HepG2 (cell line): ENCODE measurements at regions of chr18 and their contacts with region 1.

Region 1: GRCh38 chr18:69400253-69400975 is at the start of gene DOK6:
- DNase-seq: peak; percentile 84
- ATAC-seq: peak; percentile 86
- H3K4me3 ChIP-seq: peak within 1 kb of the TSS; percentile 71 to 83 (median 82)
- H3K27ac ChIP-seq: peak within 1 kb of the TSS; percentile 77
- H3K4me1 ChIP-seq: peaks cover 45% of the 10 kb centered on the region
- H3K27me3 ChIP-seq: peaks cover 0 to 4% of the 10 kb centered on the region in 2 experiments; a peak in 3 of 5 replicates
- CTCF ChIP-seq: no peak
- EP300 ChIP-seq: no peak
- POLR2A ChIP-seq: peak; percentile 57 to 72
- RAD21 ChIP-seq: no peak
- total RNA-seq, gene DOK6: 14.7 and 17.2 TPM in 2 replicates

Region 2: DNA sequence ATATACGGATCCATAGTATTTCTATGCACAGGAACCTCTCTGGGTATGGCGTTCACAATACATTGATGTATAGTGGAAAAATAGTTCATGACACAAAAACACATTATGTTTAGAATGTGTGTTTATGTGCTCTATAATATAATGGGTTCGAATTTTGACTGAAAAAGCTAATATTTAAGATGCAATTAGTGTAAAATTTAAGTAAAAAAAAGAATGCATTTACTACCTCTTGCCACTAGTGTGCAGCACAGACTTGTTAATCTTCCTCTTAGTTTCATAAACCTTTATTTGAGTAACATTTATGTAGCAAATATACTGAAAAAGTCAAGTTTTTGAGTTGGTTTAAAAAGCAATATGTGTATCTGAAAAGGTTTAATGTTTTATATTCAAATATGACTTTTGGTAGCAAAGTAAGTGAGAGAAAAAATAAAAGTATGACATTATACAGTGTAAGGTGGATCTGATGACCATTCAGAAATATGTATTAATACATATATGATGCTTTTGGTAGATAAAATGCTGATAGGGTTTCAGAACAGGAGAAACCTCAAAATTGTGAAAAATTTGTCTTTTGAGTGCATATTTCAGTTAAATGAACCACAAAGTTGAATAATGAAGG is 553.1 kb before region 1 on chr18:
- CTCF ChIA-PET with region 1: no interaction called
- POLR2A ChIA-PET with region 1: no interaction called
- in situ Hi-C with region 1: no loop called
- intact Hi-C with region 1: loop called (anchors 10 kb)
- DNase-seq: peak; percentile 4
- ATAC-seq: no peak
- H3K4me3 ChIP-seq: no peak overlapping the region
- H3K27ac ChIP-seq: no peak overlapping the region
- H3K4me1 ChIP-seq: no peaks in the 10 kb centered on the region
- H3K27me3 ChIP-seq: no peaks in the 10 kb centered on the region
- CTCF ChIP-seq: peak; percentile 63
- EP300 ChIP-seq: no peak
- POLR2A ChIP-seq: no peak
- RAD21 ChIP-seq: peak; percentile 38; the same call in 1 of the 2 replicates

Region 3: DNA sequence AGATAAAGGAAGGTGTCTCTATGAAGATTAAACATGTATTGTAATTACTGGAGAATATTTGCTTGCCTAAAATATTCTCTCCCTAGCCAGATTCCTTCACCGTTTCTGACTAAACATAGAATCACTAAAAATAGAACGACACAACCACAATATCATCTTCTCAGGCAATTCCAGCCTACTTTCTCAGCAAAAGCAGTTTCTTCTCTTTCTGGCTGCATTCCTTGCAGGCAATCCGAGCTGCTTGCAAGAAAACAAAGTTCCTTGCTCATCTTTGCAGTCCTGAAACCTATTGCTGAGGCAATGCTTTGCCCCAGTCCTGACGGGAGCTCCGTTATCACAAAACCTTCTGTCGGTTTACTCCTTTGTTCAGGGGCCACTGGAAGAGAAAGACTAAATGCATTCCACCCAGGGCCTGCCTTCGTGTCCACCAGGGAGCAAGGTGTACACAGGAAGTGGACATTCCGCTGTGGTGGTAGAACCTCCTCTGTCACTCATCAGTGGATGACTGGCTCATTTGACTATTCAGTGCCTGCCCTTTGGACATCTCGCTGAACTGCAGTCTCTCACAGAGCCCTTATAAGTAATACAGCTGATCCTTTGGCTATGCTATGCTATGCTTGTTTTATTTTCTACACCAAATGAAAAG is 238.9 kb before region 1 on chr18:
- CTCF ChIA-PET with region 1: no interaction called
- POLR2A ChIA-PET with region 1: no interaction called
- in situ Hi-C with region 1: no loop called
- intact Hi-C with region 1: loop called (anchors 10 kb)
- DNase-seq: peak; percentile 60
- ATAC-seq: peak; percentile 100
- H3K4me3 ChIP-seq: peak overlapping the region in 2 of 3 experiments; percentile 1 to 45; a peak in 2 of 6 replicates
- H3K27ac ChIP-seq: no peak overlapping the region
- H3K4me1 ChIP-seq: peaks cover 19% of the 10 kb centered on the region
- H3K27me3 ChIP-seq: no peaks in the 10 kb centered on the region
- CTCF ChIP-seq: peak; percentile 21; the same call in 1 of the 2 replicates
- EP300 ChIP-seq: no peak
- POLR2A ChIP-seq: no peak
- RAD21 ChIP-seq: no peak

Region 4: DNA sequence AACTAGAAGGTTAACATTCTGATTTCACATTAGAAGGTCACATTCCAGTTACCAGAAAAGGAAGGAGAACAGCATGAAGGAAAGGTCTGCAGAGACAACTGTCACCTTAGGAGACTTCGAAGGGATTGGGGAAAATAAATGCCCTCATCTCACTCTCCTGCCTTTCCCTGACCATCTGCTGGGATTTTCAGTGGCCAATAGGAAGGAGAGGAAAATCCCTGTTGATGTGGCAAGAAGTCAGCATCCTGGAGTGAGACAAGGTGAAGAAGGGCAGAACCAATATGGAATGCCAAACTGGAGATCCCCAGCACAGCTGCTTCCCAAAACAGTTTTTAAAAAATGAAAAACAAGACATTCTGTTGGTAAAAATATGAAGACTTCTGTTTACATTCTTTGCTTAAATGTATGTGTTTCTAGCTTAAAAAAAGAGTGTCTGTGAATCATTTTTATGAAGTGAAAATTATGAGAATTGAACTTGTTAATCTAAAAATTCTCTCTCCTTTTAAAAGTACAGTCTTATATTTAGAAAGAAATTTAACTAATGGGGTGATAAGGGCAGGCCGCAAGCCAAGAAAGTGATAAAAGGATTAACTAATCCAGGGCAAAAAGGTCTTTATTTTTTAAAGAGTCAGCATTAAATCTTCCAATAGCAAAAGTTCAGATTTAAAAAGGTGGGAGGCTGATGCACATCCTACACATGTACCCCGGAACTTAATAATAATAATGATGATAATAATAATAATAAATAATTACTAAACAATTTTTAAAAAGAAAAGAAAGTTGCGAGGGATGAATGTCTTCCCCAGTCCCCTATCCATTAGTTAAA is 160.4 kb before region 1 on chr18:
- CTCF ChIA-PET with region 1: no interaction called
- POLR2A ChIA-PET with region 1: no interaction called
- in situ Hi-C with region 1: no loop called
- intact Hi-C with region 1: loop called (anchors 10 kb)
- DNase-seq: no peak
- ATAC-seq: no peak
- H3K4me3 ChIP-seq: no peak overlapping the region
- H3K27ac ChIP-seq: no peak overlapping the region
- H3K4me1 ChIP-seq: no peaks in the 10 kb centered on the region
- H3K27me3 ChIP-seq: no peaks in the 10 kb centered on the region
- CTCF ChIP-seq: no peak
- EP300 ChIP-seq: no peak
- POLR2A ChIP-seq: no peak
- RAD21 ChIP-seq: no peak

Region 5: DNA sequence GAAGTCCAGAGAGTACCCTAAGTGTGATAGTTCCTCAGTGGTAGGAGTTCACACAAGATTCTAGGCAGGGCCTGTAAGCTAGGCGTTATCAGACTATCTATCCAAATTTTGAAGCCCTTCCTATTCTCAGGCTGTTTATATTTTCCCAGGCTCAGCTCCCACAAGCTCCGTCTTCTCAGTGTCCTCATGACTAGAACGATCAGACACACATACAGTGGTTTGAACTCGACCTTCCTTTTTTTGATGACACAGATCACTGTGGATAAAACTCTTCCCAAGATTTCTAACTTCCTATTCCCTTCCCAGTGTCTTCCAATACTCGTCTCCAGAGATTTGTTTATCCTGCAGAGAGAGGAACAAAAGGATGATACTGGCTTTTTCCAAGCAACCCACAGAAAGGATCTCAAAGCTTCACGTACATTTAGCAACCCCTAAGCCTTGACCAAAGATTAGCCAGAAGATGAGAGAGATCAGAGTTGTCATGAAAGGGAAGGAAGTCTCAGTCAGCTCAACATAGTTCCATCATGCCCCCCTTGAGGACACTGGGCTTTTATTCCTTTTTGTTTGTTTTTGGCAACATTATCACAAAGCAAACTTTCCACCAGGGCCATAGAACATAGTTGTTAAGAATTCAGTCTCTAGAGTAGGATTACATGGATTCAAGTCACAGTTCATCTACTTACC is 42.1 kb before region 1 on chr18:
- CTCF ChIA-PET with region 1: no interaction called
- POLR2A ChIA-PET with region 1: interaction called, 6 read pairs
- in situ Hi-C with region 1: no loop called
- intact Hi-C with region 1: loop called (anchors 2 kb)
- DNase-seq: peak; percentile 99
- ATAC-seq: peak; percentile 97
- H3K4me3 ChIP-seq: peak overlapping the region in 2 of 3 experiments; percentile 17; a peak in 2 of 6 replicates
- H3K27ac ChIP-seq: peak overlapping the region; percentile 96
- H3K4me1 ChIP-seq: peaks cover 77% of the 10 kb centered on the region
- H3K27me3 ChIP-seq: no peaks in the 10 kb centered on the region
- CTCF ChIP-seq: no peak
- EP300 ChIP-seq: peak; percentile 85 to 99; a peak in 3 of 4 replicates
- POLR2A ChIP-seq: peak in 1 of 2 experiments; percentile 60; a peak in 2 of 4 replicates
- RAD21 ChIP-seq: no peak

Region 6: DNA sequence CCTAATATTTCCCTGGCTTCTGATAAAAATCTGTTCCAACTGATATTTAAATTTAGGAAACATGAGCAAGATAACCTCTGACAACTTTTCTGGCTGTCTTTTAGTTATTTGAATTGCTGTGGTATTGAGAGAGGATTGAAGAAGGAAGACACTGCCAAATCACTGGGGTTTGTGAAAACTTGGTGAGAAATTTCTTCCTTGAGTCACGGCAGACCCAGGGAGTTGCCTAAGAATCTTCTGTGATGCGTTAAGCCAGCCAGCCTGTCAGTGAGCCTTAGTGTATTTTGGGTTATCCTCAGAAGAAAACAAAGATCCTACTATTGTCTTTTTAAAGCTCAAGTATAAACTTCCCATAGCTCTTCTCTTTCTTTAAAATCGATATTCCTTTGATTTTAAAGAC is 17.2 kb before region 1 on chr18:
- CTCF ChIA-PET with region 1: no interaction called
- POLR2A ChIA-PET with region 1: no interaction called
- in situ Hi-C with region 1: no loop called
- intact Hi-C with region 1: no loop called
- DNase-seq: no peak
- ATAC-seq: no peak
- H3K4me3 ChIP-seq: no peak overlapping the region
- H3K27ac ChIP-seq: no peak overlapping the region
- H3K4me1 ChIP-seq: peaks cover 13% of the 10 kb centered on the region
- H3K27me3 ChIP-seq: no peaks in the 10 kb centered on the region
- CTCF ChIP-seq: no peak
- EP300 ChIP-seq: no peak
- POLR2A ChIP-seq: no peak
- RAD21 ChIP-seq: no peak

Region 7: DNA sequence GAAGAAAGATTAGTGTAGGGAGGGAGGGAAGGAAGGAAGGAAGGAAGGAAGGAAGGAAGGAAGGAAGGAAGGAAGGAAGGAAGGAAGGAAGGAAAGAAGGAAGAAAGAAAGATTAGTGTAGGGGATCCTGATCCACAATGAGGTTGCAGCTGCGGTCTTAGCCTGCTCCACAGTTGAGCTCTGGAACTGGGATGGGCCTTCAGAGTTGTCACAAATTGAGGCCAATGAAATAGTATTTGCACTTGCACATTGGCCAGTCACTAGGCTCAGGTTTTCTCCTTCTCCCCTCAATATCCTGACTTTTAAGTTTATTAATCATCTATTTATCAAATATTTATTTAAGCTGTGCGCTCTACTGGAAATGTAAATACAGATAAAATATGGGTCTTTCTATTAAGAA is 34.6 kb after region 1 on chr18:
- CTCF ChIA-PET with region 1: no interaction called
- POLR2A ChIA-PET with region 1: no interaction called
- in situ Hi-C with region 1: no loop called
- intact Hi-C with region 1: no loop called
- DNase-seq: no peak
- ATAC-seq: no peak
- H3K4me3 ChIP-seq: no peak overlapping the region
- H3K27ac ChIP-seq: no peak overlapping the region
- H3K4me1 ChIP-seq: peaks cover 12% of the 10 kb centered on the region
- H3K27me3 ChIP-seq: no peaks in the 10 kb centered on the region
- CTCF ChIP-seq: no peak
- EP300 ChIP-seq: no peak
- POLR2A ChIP-seq: no peak
- RAD21 ChIP-seq: no peak

Region 8: DNA sequence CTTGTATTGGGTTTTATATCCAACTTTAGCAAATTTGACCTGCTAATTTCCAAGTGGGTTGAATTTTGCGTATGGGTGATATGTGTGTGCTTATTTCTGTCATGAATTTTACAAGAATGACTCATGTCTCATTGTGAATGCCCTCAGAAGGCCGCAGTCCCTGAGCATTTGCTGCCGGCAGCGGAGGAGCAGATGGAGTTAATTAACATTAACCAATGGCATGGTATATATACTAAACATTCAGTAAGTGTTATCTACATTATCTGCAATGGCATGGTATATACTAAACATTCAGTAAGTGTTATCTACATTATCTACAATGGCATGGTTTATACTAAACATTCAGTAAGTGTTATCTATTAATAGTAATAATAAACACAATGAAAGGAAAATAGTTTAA is 90.4 kb after region 1 on chr18:
- CTCF ChIA-PET with region 1: no interaction called
- POLR2A ChIA-PET with region 1: no interaction called
- in situ Hi-C with region 1: no loop called
- intact Hi-C with region 1: loop called (anchors 5 kb)
- DNase-seq: no peak
- ATAC-seq: no peak
- H3K4me3 ChIP-seq: no peak overlapping the region
- H3K27ac ChIP-seq: no peak overlapping the region
- H3K4me1 ChIP-seq: peaks cover 12% of the 10 kb centered on the region; the same call in 1 of the 2 replicates
- H3K27me3 ChIP-seq: no peaks in the 10 kb centered on the region
- CTCF ChIP-seq: no peak
- EP300 ChIP-seq: no peak
- POLR2A ChIP-seq: no peak
- RAD21 ChIP-seq: no peak